MCF 10A (cell line): ENCODE measurements at regions of chr12 and their contacts with region 1.

Region 1: DNA sequence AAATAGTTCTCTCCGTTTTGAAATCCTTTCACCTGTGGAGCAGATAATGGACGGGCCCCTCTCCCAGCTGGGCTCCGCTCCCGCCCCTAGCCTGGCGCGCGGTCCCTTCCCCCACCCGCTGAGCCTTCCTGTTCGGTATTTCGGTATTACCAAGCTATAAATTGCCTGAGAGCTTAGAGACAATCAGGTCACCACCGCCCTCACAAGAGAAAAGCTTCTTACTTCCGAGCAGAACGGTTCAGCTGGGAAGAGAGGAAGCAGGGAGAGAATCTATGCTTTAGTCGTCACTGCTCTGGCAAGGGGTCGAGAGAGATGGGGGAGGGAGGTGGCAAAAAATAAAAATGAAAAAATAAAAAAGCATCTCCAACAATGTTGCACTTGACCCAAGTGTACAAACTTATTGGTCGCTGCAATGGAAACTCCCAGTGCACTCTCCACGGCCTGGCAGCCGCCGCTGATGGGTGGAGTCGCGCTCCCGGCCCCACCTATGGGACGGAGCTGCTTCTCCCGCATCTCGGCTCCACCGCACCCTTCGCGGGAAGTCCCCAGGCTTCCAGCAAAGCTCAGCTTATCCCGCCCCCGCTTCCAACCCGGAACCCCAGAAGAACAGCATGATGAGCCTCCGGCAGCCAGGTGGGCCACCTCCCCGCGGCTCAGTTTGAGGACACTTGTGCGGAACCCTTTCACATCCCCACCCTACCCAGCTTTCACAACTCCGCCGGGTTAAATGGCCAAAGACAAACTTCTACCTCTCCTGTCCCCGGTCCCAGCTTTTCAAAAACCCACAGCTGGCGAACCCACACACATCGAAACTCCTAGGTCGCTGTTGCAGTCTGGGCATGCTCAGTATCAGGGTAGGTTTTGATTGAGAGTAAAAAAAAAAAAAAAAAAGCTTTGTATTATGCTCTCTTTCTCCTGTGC is 832 bp upstream of the SYT1 start:
- DNase-seq: peak; percentile 72
- H3K4me3 Mint-ChIP-seq: peak overlapping the region; percentile 96
- H3K27ac Mint-ChIP-seq: peak overlapping the region; percentile 85
- H3K4me1 Mint-ChIP-seq: peaks cover 8% of the 10 kb centered on the region
- H3K27me3 Mint-ChIP-seq: no peaks in the 10 kb centered on the region
- CTCF ChIP-seq: no peak

Region 2: GRCh38 chr12:78928200-78929074 is 64.7 kb after region 1 on chr12:
- CTCF ChIA-PET with region 1: no interaction called
- POLR2A ChIA-PET with region 1: interaction called, 4 read pairs
- intact Hi-C with region 1: loop called (anchors 2 kb)
- DNase-seq: peak; percentile 69
- H3K4me3 Mint-ChIP-seq: no peak overlapping the region
- H3K27ac Mint-ChIP-seq: peak overlapping the region; percentile 76
- H3K4me1 Mint-ChIP-seq: peaks cover 14% of the 10 kb centered on the region
- H3K27me3 Mint-ChIP-seq: no peaks in the 10 kb centered on the region
- CTCF ChIP-seq: no peak